ENCODE measurements at regions of chr7 and their contacts with region 1.

Region 1: GRCh38 chr7:116862234-116862950 is at the start of gene CAPZA2:
- DNase-seq: peak; percentile 97
- total RNA-seq, gene CAPZA2: 143 and 193 TPM in 2 replicates

Region 2: DNA sequence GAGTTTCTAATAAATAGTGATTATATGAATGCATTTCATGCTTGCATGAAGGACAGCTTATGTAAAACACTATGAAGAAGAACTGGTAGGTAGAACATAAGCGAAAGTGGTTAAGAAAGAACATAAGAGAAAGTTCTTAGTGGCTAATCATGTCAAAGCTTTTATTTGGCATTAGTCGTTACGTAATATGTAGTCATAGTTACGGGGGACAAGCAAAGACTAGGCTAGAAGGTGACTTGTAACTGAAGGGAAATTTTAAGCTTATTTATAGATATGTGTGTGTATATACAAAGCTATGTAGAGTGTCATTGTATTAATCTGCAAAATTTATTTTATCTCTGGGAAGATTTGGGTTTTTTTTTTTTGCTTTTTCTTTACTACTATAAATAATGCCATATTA is 36.9 kb after region 1 on chr7:
- in situ Hi-C with region 1: loop called (anchors 5 kb)
- DNase-seq: no peak

Measured in G401 (cell line).